Natural killer cell (primary cell): ENCODE measurements at regions of chr2 and their contacts with region 1.

Region 1: GRCh38 chr2:68196120-68196716 is 38.5 kb downstream of the PNO1 start:
- DNase-seq: peak in 1 of 2 donors; percentile 77
- ATAC-seq: peak in 2 of 3 donors; percentile 24 to 57
- H3K4me3 ChIP-seq: no peak overlapping the region
- H3K4me3 Mint-ChIP-seq: no peak overlapping the region
- H3K27ac ChIP-seq: no peak overlapping the region
- H3K27ac Mint-ChIP-seq: peak overlapping the region; percentile 62 to 82
- H3K4me1 ChIP-seq: no peaks in the 10 kb centered on the region
- H3K4me1 Mint-ChIP-seq: peaks cover 53 to 57% of the 10 kb centered on the region in 2 donors
- H3K27me3 ChIP-seq: no peaks in the 10 kb centered on the region
- H3K27me3 Mint-ChIP-seq: no peaks in the 10 kb centered on the region
- CTCF ChIP-seq: peak; percentile 65

Region 2: DNA sequence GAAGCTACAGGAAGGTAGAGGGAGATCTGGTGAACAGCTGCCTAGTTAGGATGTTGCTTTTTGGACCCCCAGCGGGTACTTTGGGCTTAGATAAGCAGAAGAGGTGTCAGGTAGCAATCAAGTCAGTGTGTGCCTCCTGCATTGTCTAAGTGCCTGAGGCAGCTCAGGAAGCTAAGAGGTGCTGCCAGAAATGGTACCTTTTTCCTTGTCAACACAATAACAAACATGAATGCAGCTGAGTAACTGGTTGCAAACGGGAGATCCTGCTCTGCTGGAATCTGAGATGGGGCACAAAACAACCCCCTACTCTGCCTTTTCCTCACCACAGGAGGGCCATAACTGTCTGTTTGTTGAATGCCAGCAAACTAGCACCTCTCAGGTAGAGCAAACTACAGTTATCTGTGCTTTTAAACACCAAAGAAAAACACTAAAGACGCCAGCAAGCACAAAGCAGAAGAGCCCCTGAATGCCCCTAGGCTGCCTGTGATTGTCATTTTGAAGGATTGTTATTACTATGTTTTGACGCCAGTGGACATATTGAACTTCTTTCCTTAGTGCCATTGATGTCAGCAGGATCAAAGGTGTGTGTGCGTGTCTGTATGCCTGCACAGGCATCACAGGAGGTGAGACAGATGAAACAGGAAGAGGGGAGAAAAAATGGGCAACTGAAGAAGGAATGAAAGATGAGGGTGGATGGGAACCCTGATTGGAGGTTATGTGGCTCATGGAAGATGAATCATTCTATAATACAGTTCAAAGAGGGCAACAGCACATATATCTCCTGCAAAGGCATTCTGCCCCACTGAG is 647.6 kb before region 1 on chr2:
- intact Hi-C with region 1: no loop called
- DNase-seq: no peak
- ATAC-seq: no peak
- H3K4me3 ChIP-seq: no peak overlapping the region
- H3K4me3 Mint-ChIP-seq: no peak overlapping the region
- H3K27ac ChIP-seq: no peak overlapping the region
- H3K27ac Mint-ChIP-seq: no peak overlapping the region
- H3K4me1 ChIP-seq: no peaks in the 10 kb centered on the region
- H3K4me1 Mint-ChIP-seq: peaks cover 6 to 8% of the 10 kb centered on the region in 2 donors
- H3K27me3 ChIP-seq: no peaks in the 10 kb centered on the region
- H3K27me3 Mint-ChIP-seq: peaks cover 0 to 9% of the 10 kb centered on the region in 2 donors
- CTCF ChIP-seq: no peak

Region 3: GRCh38 chr2:68251187-68251854 is 55.1 kb after region 1 on chr2:
- intact Hi-C with region 1: loop called (anchors 2 kb)
- DNase-seq: peak; percentile 62 to 93
- ATAC-seq: peak; percentile 65 to 79 (median 66)
- H3K4me3 ChIP-seq: peak overlapping the region; percentile 80
- H3K4me3 Mint-ChIP-seq: peak overlapping the region; percentile 94
- H3K27ac ChIP-seq: peak overlapping the region; percentile 95
- H3K27ac Mint-ChIP-seq: peak overlapping the region in 1 of 2 donors; percentile 97
- H3K4me1 ChIP-seq: peaks cover 15% of the 10 kb centered on the region
- H3K4me1 Mint-ChIP-seq: peaks cover 28 to 41% of the 10 kb centered on the region in 2 donors
- H3K27me3 ChIP-seq: no peaks in the 10 kb centered on the region
- H3K27me3 Mint-ChIP-seq: peaks cover 0 to 3% of the 10 kb centered on the region in 2 donors
- CTCF ChIP-seq: peak; percentile 69

Region 4: DNA sequence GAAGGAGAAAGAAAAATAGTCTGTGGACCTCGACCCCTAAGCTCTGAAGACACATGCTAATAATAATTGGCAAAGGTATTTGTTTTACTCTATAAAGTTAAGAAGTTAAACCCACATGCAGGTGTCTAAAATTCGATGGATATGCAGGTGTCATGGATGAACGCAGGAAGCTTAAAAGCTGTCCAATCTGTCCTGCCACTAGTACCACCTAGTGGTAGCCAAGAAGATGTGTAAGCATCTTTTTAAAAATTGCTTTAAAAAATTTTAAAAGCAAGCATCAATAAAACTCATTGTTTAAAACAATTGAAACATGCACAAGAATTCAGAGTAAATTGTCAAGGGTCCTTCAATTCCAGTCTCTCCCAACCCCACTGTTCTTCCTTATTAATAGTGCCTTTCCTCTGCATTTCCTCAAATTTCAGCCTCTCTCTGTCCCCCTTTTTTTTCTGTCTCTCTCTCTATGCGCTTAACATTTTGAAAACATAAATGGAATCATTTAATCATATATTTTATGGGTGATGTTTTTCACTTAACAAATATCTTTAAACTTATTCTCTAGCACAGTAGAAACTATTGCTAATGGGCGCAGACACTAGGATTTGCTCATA is 86.7 kb after region 1 on chr2:
- intact Hi-C with region 1: loop called (anchors 1 kb)
- DNase-seq: peak in 1 of 2 donors; percentile 71
- ATAC-seq: peak; percentile 57 to 74 (median 64)
- H3K4me3 ChIP-seq: no peak overlapping the region
- H3K4me3 Mint-ChIP-seq: no peak overlapping the region
- H3K27ac ChIP-seq: no peak overlapping the region
- H3K27ac Mint-ChIP-seq: no peak overlapping the region
- H3K4me1 ChIP-seq: no peaks in the 10 kb centered on the region
- H3K4me1 Mint-ChIP-seq: no peaks in the 10 kb centered on the region
- H3K27me3 ChIP-seq: no peaks in the 10 kb centered on the region
- H3K27me3 Mint-ChIP-seq: peaks cover 9 to 10% of the 10 kb centered on the region in 2 donors
- CTCF ChIP-seq: peak; percentile 71